Left cardiac atrium (tissue), 4 donors: ENCODE measurements at regions of chr14 and their contacts with region 1.

Region 1: DNA sequence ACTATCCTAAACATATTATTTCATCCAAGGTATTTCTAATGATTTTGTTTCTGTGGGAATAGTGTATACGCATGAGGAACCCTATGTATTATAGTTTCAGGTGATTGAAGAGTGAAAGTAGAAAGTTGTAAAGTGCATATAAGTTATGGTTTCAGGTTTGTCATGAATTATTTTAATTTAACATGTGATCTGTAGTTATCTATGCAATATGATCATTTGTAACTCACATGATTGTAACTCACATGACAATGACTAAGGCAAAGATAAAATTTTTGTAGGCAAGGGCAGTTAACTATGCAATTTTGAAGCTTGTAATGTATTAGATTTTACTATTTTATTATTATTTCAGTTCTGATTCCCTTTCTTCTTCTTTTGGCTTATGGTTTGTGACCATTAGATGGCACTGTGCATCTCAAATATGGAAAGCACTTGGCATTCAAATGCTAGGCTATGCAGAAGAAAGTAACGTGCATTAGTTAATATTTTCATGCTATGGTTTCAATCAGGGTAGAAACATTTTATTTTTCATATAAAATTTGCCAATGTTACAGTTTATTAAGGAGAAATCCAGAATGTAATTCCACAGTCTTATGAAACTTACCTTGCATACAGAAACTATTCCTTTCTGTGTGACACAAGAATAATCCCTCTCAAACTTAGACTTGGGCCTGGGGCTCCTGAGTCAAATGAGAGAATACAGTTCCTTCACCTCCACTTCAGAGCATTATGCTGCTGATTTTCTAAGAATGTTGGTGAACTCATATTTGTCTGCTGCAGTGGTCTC is 15.8 kb upstream of the TMEM30B start:
- DNase-seq: no peak
- ATAC-seq: peak; percentile 27 to 53

Region 2: DNA sequence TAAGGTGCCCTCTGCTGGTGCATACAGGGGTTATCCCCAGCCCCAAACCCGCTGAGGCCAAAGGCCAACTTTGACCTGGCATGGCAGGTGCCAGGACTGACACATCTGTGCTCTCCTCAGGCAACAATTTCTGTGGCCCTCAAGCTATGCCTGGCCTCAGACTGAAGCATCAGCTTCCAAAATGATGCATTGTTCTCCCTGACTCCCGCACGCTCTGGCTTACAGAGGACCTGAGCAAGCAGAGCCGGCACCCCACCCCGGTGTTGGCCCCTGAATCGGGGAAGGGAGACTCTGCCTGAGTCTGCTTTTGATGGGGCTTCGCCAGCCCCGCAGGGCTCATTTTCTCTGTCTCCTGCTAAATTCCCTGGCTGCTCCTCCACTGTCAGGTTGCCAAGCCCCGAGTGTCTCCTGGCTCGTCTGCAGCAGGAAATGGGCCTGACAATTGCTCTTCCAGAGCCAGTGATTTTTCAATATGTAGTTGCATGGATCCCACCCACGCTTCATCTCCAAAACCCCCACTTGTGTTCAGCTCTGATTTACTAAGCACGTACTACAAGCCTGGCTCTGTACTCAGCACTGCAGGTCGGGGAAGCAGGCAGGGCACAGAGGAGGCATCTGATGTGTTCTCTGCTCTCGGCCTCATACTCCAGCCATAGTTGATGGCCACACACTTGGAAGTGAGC is 189.8 kb before region 1 on chr14:
- intact Hi-C with region 1: no loop called
- DNase-seq: peak; percentile 49
- ATAC-seq: peak in 1 of 2 donors; percentile 17

Region 3: DNA sequence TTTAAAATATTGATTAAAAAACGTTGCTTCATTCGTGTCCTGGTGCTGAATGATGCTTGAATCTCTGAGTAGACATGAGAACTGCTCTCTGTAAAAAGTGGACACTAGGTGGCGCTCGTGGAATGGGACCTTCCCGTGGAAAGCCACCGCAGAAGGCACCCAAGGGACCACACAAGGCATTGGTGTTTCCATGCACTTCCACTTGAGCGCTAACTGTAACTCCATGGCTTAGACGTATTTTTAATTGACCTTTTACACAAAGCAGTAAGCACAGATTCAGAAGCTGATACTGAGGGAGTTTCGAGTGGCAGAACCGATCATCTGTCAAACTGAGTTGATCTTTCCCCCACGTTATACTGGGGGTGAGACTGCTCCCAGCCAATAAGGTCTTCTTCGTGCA is 159.8 kb after region 1 on chr14:
- intact Hi-C with region 1: loop called (anchors 5 to 10 kb)
- DNase-seq: peak; percentile 89
- ATAC-seq: peak; percentile 68 to 74

Region 4: DNA sequence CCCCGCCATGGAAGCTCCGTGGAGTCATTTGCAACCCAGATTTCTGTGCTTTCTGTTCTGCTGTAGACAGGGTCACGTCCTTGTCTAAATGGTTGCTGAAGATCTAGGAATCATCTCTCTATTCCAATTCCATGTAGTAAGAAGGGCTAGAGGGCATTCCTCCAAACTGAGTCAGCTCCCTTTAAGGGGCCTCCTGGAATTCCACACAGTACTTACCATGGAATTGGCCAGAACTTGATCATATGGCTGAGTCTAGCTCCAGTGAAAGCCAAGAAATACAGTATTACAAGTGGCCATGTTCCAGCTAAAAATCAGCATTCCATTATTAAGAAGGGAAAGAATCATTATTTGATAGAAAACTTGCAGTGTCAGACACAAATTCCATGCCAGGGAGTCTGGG is 196.3 kb after region 1 on chr14:
- intact Hi-C with region 1: no loop called
- DNase-seq: no peak
- ATAC-seq: peak in 1 of 2 donors; percentile 21

Region 5: DNA sequence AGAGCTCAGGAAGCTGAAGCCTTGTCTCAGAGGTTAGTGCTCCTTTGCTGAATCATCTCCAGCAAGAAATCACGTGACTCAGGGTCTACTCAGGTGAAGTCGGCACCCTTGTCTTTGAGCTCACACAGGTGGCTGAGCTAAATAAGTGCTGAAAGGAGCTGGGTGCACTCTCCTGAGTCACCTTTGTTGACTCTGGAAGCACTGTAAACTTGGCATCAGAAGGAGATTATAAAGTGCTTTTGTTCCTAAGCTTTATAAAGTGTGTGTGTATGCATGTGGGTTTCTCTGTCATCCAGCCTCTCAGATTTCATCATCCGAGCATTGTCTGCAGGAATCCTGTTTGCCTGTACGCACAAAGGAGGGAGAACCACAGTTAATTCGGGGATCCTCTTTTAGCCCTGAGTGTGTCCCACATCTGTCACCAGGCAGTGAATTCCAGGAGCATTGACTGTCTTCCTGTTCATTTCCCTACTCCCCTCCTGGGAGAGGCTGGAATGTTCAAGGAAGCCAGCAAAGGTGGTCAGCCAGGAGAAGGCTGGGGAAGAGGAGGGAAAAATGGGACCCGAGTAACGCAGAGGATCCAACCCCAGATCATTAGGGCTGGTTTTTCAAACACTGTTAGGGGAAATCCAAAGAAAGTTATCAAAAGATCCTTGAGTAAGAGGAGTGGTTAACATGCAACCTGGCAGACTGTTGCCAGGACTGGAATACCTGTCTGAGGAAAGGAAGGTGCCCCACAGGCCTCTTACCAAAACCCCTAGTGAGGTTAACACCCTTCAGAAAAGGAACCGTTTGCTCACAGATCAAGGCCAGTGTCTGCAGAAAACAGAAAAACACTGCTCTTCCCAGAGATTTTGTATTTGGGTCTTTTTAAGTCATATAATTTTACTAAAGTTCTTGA is 240.9 kb after region 1 on chr14:
- intact Hi-C with region 1: no loop called
- DNase-seq: no peak
- ATAC-seq: peak; percentile 31 to 61

Region 6: GRCh38 chr14:61568572-61569131 is 271.7 kb after region 1 on chr14:
- intact Hi-C with region 1: no loop called
- DNase-seq: peak; percentile 38
- ATAC-seq: peak; percentile 45 to 48

Region 7: GRCh38 chr14:61837336-61838229 is 540.7 kb after region 1 on chr14:
- intact Hi-C with region 1: loop called (anchors 2 to 10 kb)
- DNase-seq: peak; percentile 80
- ATAC-seq: peak; percentile 93 to 95

Region 8: GRCh38 chr14:62126879-62127478 is 830.1 kb after region 1 on chr14:
- intact Hi-C with region 1: loop called in 1 of 2 experiments (anchors 10 kb)
- DNase-seq: no peak
- ATAC-seq: peak; percentile 46 to 86